ENCODE measurements at regions of chr12 and their contacts with region 1.

Region 1: GRCh38 chr12:69239352-69239921 is at the start of gene CPSF6:
- DNase-seq: peak; percentile 93 to 97
- H3K4me3 ChIP-seq: peak within 1 kb of the TSS; percentile 78
- H3K4me1 ChIP-seq: peaks cover 27% of the 10 kb centered on the region
- H3K27me3 ChIP-seq: no peaks in the 10 kb centered on the region

Region 2: DNA sequence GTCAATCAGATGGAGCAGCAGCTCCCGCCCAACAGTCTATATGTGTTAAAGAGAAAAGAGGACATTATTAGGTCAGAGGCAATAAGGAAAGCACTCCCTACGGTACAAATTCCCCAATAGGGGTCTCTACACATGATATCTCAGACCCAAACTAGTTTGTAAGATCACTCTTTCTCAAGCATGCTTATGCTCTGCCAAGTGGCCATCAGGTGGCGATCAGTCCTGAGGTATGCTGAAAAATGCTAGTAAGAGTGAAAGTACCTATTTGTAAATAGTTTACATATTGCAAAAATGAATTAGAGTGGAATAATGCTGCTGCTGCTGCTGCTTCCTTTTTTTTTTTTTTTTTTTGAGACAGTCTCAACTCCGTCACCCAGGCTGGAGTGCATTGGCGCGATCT is 367.5 kb before region 1 on chr12:
- in situ Hi-C with region 1: loop called (anchors 25 kb)
- DNase-seq: peak; percentile 13 to 23
- H3K4me3 ChIP-seq: no peak overlapping the region
- H3K4me1 ChIP-seq: no peaks in the 10 kb centered on the region
- H3K27me3 ChIP-seq: no peaks in the 10 kb centered on the region

Region 3: DNA sequence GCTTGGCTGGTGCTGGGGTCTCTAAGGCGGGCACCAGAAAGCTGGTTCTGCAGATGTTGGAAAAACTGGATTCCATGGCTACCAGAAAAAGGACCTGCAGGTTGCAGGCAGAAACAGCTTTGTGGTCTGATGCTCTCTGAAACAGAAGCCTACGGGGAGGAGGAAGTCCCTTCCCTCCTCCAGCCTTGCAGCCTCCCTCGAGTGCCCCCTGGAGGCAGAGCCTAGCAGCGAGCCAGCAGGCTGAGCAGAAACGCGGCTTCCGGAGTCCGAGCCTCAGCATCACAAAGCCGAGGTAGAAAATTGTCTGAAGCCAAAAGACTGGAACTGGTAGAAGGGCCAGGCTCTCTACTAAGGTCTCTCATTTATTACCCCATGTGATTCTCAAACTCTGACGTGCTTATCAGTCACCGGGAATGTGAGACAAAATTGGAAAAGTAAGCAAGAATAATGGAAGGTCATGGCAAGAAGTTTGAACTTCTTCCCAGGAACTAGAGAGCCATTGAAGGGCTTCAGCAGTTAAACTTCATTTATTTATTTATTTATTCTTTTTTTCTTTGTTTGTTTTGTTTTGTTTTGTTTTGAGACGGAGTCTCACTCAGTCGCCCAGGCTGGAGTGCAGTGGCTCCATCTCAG is 82.3 kb before region 1 on chr12:
- in situ Hi-C with region 1: loop called (anchors 10 kb)
- DNase-seq: peak; percentile 82 to 95
- H3K4me3 ChIP-seq: no peak overlapping the region
- H3K4me1 ChIP-seq: peaks cover 6% of the 10 kb centered on the region
- H3K27me3 ChIP-seq: no peaks in the 10 kb centered on the region